Activated CD4-positive, alpha-beta T cell treated with anti-CD3 and anti-CD28 coated beads, Interleukin-2, amount 10 ng/mL, durations not matched to agents 24 days and 14 days (primary cell): ENCODE measurements at regions of chr9 and their contacts with region 1.

Region 1: GRCh38 chr9:127916665-127917613 is at the start of gene ST6GALNAC4:
- DNase-seq: peak; percentile 98
- H3K4me3 Mint-ChIP-seq: peak within 1 kb of the TSS; percentile 86
- H3K27ac Mint-ChIP-seq: peak within 1 kb of the TSS; percentile 87
- H3K4me1 Mint-ChIP-seq: peaks cover 44% of the 10 kb centered on the region
- H3K27me3 Mint-ChIP-seq: peaks cover under 1% of the 10 kb centered on the region
- total RNA-seq, gene ST6GALNAC4: 28.0 and 28.3 TPM in 2 replicates

Region 2: DNA sequence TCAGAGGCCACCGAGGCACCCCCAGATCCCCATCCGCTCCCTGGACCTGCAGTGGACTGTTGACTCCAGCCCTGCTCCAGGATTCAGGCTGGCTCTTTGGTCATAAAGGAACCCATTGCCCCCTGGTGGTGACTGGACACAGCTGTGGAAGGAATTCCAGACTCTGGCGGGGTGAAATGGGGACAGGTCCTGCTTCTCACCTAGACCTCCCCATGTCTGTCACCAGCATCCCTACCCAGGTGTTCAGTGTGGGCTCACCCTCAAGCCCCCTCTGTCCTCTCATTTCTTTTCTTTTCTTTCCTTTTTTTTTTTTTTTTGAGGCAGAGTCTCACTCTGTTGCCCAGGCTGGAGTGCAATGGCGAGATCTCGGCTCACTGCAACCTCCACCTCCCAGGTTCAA is 330.4 kb before region 1 on chr9:
- intact Hi-C with region 1: loop called (anchors 2 kb)
- DNase-seq: peak; percentile 89
- H3K4me3 Mint-ChIP-seq: no peak overlapping the region
- H3K27ac Mint-ChIP-seq: no peak overlapping the region
- H3K4me1 Mint-ChIP-seq: peaks cover 13% of the 10 kb centered on the region
- H3K27me3 Mint-ChIP-seq: peaks cover 23% of the 10 kb centered on the region

Region 3: GRCh38 chr9:127611899-127612790 is 304.8 kb before region 1 on chr9 and contains the start of gene STXBP1:
- intact Hi-C with region 1: loop called (anchors 5 kb)
- DNase-seq: peak; percentile 98
- H3K4me3 Mint-ChIP-seq: peak within 1 kb of the TSS; percentile 85
- H3K27ac Mint-ChIP-seq: peak within 1 kb of the TSS; percentile 76
- H3K4me1 Mint-ChIP-seq: peaks cover 27% of the 10 kb centered on the region
- H3K27me3 Mint-ChIP-seq: peaks cover 46% of the 10 kb centered on the region
- total RNA-seq, gene STXBP1: 26.5 and 31.1 TPM in 2 replicates

Region 4: GRCh38 chr9:127869310-127870152 is 47.4 kb before region 1 on chr9:
- intact Hi-C with region 1: loop called (anchors 5 kb)
- DNase-seq: peak; percentile 95
- H3K4me3 Mint-ChIP-seq: no peak overlapping the region
- H3K27ac Mint-ChIP-seq: no peak overlapping the region
- H3K4me1 Mint-ChIP-seq: peaks cover 11% of the 10 kb centered on the region
- H3K27me3 Mint-ChIP-seq: no peaks in the 10 kb centered on the region

Region 5: GRCh38 chr9:127899128-127899946 is 17.6 kb before region 1 on chr9 and contains the start of gene ST6GALNAC6:
- intact Hi-C with region 1: loop called (anchors 1 kb)
- DNase-seq: peak; percentile 94
- H3K4me3 Mint-ChIP-seq: peak within 1 kb of the TSS; percentile 87
- H3K27ac Mint-ChIP-seq: peak within 1 kb of the TSS; percentile 87
- H3K4me1 Mint-ChIP-seq: peaks cover 31% of the 10 kb centered on the region
- H3K27me3 Mint-ChIP-seq: no peaks in the 10 kb centered on the region
- total RNA-seq, gene ST6GALNAC6: 53.3 and 61.2 TPM in 2 replicates

Region 6: GRCh38 chr9:127904561-127905003 is 12.4 kb before region 1 on chr9:
- intact Hi-C with region 1: loop called (anchors 1 kb)
- DNase-seq: no peak
- H3K4me3 Mint-ChIP-seq: peak overlapping the region; percentile 88
- H3K27ac Mint-ChIP-seq: peak overlapping the region; percentile 99
- H3K4me1 Mint-ChIP-seq: peaks cover 47% of the 10 kb centered on the region
- H3K27me3 Mint-ChIP-seq: no peaks in the 10 kb centered on the region